ENCODE measurements at regions of chr9 and their contacts with region 1.

Region 1: DNA sequence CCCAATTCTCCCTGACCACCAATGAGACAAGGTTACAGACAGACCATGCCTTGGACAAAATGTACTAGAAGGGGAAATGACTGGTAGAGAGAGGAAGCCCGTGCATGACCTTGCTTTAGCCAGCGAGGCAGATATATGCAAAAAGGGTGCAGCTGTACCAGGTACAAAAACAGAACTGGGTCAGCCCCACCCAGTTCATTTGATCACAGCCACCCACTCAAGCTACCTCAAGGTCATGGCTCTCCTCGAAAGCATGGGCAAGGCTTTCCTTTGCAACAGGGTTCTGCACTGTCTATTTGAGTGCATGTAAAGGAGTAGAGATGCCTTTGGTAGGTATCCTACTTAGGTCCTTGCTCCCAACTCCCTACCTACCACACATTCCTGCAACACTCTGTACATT is 33.3 kb downstream of the TLE1 start:
- DNase-seq: no peak
- H3K4me3 ChIP-seq: no peak overlapping the region
- H3K27ac ChIP-seq: no peak overlapping the region
- H3K4me1 ChIP-seq: no peaks in the 10 kb centered on the region
- H3K27me3 ChIP-seq: no peaks in the 10 kb centered on the region
- CTCF ChIP-seq: no peak
- POLR2A ChIP-seq: no peak

Region 2: GRCh38 chr9:81626506-81626905 is 29.5 kb before region 1 on chr9:
- intact Hi-C with region 1: loop called (anchors 2 kb)
- DNase-seq: no peak
- H3K4me3 ChIP-seq: no peak overlapping the region
- H3K27ac ChIP-seq: no peak overlapping the region
- H3K4me1 ChIP-seq: no peaks in the 10 kb centered on the region
- H3K27me3 ChIP-seq: no peaks in the 10 kb centered on the region
- CTCF ChIP-seq: no peak
- POLR2A ChIP-seq: no peak

Region 3: DNA sequence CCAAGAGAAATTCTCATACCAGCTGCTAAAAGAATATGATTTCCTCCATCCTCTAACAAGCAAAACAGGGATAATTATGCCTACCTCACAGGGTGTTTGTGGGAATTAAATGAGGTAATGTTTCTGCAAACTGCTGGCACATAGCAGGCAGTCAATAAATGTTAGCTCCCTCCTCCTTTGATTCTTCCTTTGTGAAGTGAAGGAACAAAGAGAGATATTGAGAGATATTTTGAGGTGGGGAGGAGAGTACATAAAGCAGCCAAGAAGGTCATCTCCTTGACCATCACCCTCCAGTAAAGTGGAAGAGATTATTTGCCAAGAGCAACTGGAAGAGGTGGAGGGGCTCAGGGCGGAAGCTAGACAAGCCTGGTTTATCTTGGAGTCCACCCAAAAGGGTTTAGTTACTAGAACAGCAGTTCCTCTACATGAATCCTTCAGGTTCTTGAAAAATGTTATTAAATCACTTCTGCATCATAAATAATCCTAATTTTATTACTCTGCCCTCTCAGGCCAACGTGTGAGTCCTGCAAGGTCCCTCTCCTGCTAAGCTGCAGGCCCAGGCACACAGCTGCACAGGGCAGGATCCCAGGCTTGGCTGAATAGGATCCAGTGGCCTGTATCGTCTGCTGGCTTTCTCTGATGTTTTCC is 68.4 kb after region 1 on chr9:
- intact Hi-C with region 1: no loop called
- DNase-seq: no peak
- H3K4me3 ChIP-seq: no peak overlapping the region
- H3K27ac ChIP-seq: no peak overlapping the region
- H3K4me1 ChIP-seq: no peaks in the 10 kb centered on the region
- H3K27me3 ChIP-seq: no peaks in the 10 kb centered on the region
- CTCF ChIP-seq: no peak
- POLR2A ChIP-seq: no peak

Region 4: DNA sequence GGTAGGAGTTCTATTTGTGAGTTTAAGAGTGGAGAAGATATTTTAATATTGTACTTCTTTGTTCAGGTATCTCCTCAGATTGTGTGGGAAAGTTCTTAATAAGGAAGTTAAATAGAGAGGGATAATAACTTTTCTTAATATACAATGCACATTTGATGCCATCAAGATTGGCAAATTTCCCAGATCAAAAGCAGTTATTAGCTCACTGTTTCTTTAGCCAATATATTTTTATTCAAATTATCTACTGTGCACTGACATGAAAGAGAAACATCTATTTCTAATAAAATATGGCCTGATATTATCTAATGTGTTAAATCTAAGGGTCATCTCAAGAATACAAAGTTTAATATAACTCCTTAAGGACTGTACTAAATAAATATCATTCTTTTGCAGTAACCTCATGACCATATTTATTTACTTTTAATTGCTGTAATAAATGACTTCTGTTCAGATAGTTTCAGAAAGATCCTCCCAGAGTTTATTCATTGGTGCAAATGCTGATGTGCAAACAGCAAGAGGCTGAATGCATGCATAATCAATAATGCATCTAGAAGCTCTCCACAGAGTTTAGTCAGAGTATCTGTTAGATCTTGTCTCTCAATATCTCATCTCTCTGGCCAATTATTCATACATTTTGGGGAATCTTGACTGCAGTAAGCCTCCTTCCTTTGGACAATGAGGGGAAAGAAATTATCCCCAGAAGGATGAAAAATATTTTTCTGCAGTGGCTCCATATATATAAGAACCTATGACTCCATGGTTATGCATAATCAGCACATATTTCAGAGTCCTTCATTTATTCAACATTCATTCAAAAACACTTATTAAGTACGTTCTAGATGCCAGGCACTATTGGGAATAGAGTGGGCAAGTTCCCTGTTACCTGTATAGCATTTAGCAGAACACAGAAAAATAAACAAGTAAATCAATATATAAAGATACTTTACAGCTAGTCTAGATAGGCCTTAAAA is 417.9 kb after region 1 on chr9:
- intact Hi-C with region 1: no loop called
- DNase-seq: no peak
- H3K4me3 ChIP-seq: no peak overlapping the region
- H3K27ac ChIP-seq: no peak overlapping the region
- H3K4me1 ChIP-seq: no peaks in the 10 kb centered on the region
- H3K27me3 ChIP-seq: no peaks in the 10 kb centered on the region
- CTCF ChIP-seq: no peak
- POLR2A ChIP-seq: no peak